CD8-positive, alpha-beta T cell (primary cell): ENCODE measurements at regions of chr9 and their contacts with region 1.

Region 1: GRCh38 chr9:36728651-36729520 is 156.2 kb downstream of the MELK start:
- DNase-seq: peak; percentile 9 to 72 (median 61)
- ATAC-seq: peak; percentile 38
- H3K4me3 ChIP-seq: no peak overlapping the region
- H3K4me3 Mint-ChIP-seq: no peak overlapping the region
- H3K27ac ChIP-seq: no peak overlapping the region
- H3K27ac Mint-ChIP-seq: no peak overlapping the region
- H3K4me1 ChIP-seq: no peaks in the 10 kb centered on the region
- H3K4me1 Mint-ChIP-seq: no peaks in the 10 kb centered on the region
- H3K27me3 ChIP-seq: no peaks in the 10 kb centered on the region
- H3K27me3 Mint-ChIP-seq: no peaks in the 10 kb centered on the region
- CTCF ChIP-seq: peak; percentile 89

Region 2: DNA sequence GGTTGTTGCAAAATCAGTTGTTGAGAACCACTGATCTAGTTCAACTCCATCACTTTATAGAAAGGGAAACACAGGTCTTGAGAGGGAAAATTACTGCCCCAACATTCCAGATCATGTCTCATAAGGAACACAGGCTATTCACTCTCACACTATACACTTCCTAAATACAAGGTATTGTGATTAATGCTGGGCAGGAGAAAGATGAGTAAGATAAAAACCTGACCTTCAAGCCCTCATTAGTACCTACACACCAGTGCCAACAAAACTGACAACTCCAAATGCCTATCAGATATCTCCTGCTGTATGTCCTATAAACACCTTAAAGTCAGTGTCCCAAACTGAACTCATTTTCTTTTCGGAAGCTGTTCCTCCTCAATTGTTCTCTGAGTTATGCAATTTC is 478.8 kb before region 1 on chr9:
- CTCF ChIA-PET with region 1: interaction called, 3 read pairs
- POLR2A ChIA-PET with region 1: no interaction called
- intact Hi-C with region 1: loop called in 1 of 2 experiments (anchors 2 kb)
- DNase-seq: no peak
- ATAC-seq: no peak
- H3K4me3 ChIP-seq: no peak overlapping the region
- H3K4me3 Mint-ChIP-seq: no peak overlapping the region
- H3K27ac ChIP-seq: no peak overlapping the region
- H3K27ac Mint-ChIP-seq: no peak overlapping the region
- H3K4me1 ChIP-seq: no peaks in the 10 kb centered on the region
- H3K4me1 Mint-ChIP-seq: peaks cover 18% of the 10 kb centered on the region
- H3K27me3 ChIP-seq: no peaks in the 10 kb centered on the region
- H3K27me3 Mint-ChIP-seq: no peaks in the 10 kb centered on the region
- CTCF ChIP-seq: no peak

Region 3: GRCh38 chr9:36632892-36633291 is 96.0 kb before region 1 on chr9:
- CTCF ChIA-PET with region 1: interaction called, 10 read pairs
- POLR2A ChIA-PET with region 1: no interaction called
- intact Hi-C with region 1: loop called in 1 of 2 experiments (anchors 10 kb)
- DNase-seq: peak in 2 of 9 experiments; percentile 22 to 28
- ATAC-seq: no peak
- H3K4me3 ChIP-seq: no peak overlapping the region
- H3K4me3 Mint-ChIP-seq: no peak overlapping the region
- H3K27ac ChIP-seq: no peak overlapping the region
- H3K27ac Mint-ChIP-seq: no peak overlapping the region
- H3K4me1 ChIP-seq: no peaks in the 10 kb centered on the region
- H3K4me1 Mint-ChIP-seq: no peaks in the 10 kb centered on the region
- H3K27me3 ChIP-seq: no peaks in the 10 kb centered on the region
- H3K27me3 Mint-ChIP-seq: no peaks in the 10 kb centered on the region
- CTCF ChIP-seq: peak; percentile 59